ENCODE measurements at regions of chr11 and their contacts with region 1.

Region 1: DNA sequence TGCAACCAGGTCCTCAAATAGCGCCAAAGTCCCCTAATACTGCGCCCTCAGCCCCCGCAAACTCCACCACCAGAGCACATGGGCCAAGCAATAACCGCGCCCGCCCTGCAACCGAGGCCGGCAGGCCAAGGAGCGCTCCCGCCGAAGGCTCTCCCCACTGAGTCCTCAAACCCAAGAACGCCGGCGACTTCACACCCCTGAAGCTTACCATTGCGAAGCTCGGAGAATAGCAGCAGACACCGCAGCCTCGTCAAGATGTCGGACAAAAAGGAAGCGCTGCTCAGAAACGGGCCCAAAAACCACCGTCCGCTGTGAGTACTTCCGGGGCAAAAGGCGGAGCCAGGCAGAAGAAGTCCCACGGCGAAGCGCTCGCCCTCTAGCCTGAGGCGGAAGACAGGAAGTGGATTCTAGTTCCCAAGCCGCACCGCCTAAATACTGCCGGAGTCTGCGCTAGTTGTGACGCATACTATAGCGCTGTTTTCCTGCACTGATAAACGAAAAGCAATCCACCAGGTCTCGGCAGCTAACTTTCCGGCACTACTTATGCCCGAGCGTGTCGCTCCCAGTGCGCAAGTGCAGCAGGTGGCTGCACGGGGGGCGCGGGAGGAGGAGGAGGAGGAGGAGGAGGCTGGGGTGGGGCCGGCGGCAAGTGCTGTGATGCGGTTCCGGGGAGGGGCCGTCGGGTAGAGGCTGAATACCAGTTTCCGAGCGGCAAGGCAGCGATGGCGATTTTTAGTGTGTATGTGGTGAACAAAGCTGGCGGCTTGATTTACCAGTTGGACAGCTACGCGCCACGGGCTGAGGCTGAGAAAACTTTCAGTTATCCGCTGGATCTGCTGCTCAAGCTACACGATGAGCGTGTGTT is at the starts of genes RPS25 and TRAPPC4:
- DNase-seq: peak; percentile 96 to 97 (median 96)
- H3K4me3 ChIP-seq: peak within 1 kb of the TSS; percentile 87 to 88 (median 88)
- H3K4me3 Mint-ChIP-seq: peak within 1 kb of the TSS; percentile 96 to 97
- H3K27ac ChIP-seq: peak within 1 kb of the TSS; percentile 93 to 96
- H3K27ac Mint-ChIP-seq: peak within 1 kb of the TSS; percentile 98 to 100 (median 99)
- H3K4me1 ChIP-seq: peaks cover 26 to 34% of the 10 kb centered on the region in 2 donors
- H3K4me1 Mint-ChIP-seq: peaks cover 24% of the 10 kb centered on the region
- H3K27me3 ChIP-seq: no peaks in the 10 kb centered on the region
- H3K27me3 Mint-ChIP-seq: peaks cover 0 to 1% (median 0%) of the 10 kb centered on the region in 3 donors
- CTCF ChIP-seq: no peak
- polyA plus RNA-seq, gene RPS25: 1,137 to 1,336 (median 1,264) TPM
- polyA plus RNA-seq, gene TRAPPC4: 46.9 to 54.5 (median 50.0) TPM

Region 2: GRCh38 chr11:118997627-118998387 is 20.5 kb before region 1 on chr11 and contains the start of gene CENATAC:
- intact Hi-C with region 1: loop called (anchors 1 to 2 kb)
- DNase-seq: peak; percentile 91 to 95 (median 93)
- H3K4me3 ChIP-seq: peak within 1 kb of the TSS; percentile 65 to 87 (median 82)
- H3K4me3 Mint-ChIP-seq: peak within 1 kb of the TSS; percentile 95 to 97
- H3K27ac ChIP-seq: peak within 1 kb of the TSS; percentile 37 to 87
- H3K27ac Mint-ChIP-seq: peak within 1 kb of the TSS; percentile 92 to 97 (median 95)
- H3K4me1 ChIP-seq: peaks cover 19 to 23% of the 10 kb centered on the region in 2 donors
- H3K4me1 Mint-ChIP-seq: peaks cover 25% of the 10 kb centered on the region
- H3K27me3 ChIP-seq: no peaks in the 10 kb centered on the region
- H3K27me3 Mint-ChIP-seq: peaks cover 0 to 2% (median 0%) of the 10 kb centered on the region in 3 donors
- CTCF ChIP-seq: no peak
- polyA plus RNA-seq, gene CENATAC: 2.7 to 47.8 (median 4.1) TPM

Region 3: DNA sequence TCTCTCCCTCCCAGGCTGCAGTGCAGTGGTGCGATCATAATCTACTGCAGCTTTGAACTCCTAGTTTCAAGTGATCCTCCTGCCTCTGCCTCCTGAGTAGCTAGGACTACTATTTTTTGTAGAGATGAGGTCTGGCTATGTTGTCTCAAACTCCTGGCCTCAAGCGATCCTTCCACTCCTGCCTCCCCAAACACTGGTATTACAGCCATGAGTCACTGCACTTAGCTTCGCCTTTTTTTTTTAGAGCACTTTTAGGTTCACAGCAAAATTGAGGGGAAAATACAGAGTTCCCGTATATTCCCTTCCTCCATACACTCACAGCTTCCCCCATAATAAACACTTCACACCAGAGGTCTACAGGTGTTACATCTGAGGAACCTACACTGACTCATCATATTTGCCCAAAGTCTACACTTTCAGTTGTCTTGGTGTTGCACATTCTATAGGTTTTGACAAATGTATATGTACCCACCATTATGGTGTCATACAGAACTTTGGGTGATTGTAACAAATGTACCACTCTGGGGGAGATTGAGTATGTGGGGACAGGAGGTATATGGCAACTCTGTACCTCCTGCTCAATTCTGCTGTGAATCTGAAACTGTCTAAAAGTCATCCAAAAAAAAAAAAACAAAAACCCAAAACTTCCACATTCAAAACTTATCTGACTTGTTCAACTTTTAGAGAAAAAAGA is 23.7 kb after region 1 on chr11:
- intact Hi-C with region 1: no loop called
- DNase-seq: no peak
- H3K4me3 ChIP-seq: no peak overlapping the region
- H3K4me3 Mint-ChIP-seq: no peak overlapping the region
- H3K27ac ChIP-seq: no peak overlapping the region
- H3K27ac Mint-ChIP-seq: no peak overlapping the region
- H3K4me1 ChIP-seq: no peaks in the 10 kb centered on the region
- H3K4me1 Mint-ChIP-seq: peaks cover 11% of the 10 kb centered on the region
- H3K27me3 ChIP-seq: no peaks in the 10 kb centered on the region
- H3K27me3 Mint-ChIP-seq: peaks cover 0 to 5% (median 0%) of the 10 kb centered on the region in 3 donors
- CTCF ChIP-seq: no peak

Region 4: GRCh38 chr11:119067371-119068222 is 49.3 kb after region 1 on chr11 and contains the start of gene VPS11:
- intact Hi-C with region 1: loop called in 1 of 2 experiments (anchors 5 kb)
- DNase-seq: peak; percentile 95 to 97 (median 96)
- H3K4me3 ChIP-seq: peak within 1 kb of the TSS; percentile 77 to 93 (median 89)
- H3K4me3 Mint-ChIP-seq: peak within 1 kb of the TSS; percentile 94 to 97
- H3K27ac ChIP-seq: peak within 1 kb of the TSS; percentile 91 to 96
- H3K27ac Mint-ChIP-seq: peak within 1 kb of the TSS; percentile 97 to 99 (median 98)
- H3K4me1 ChIP-seq: peaks cover 29 to 37% of the 10 kb centered on the region in 2 donors
- H3K4me1 Mint-ChIP-seq: peaks cover 33% of the 10 kb centered on the region
- H3K27me3 ChIP-seq: no peaks in the 10 kb centered on the region
- H3K27me3 Mint-ChIP-seq: peaks cover 0 to 3% (median 0%) of the 10 kb centered on the region in 3 donors
- CTCF ChIP-seq: no peak
- polyA plus RNA-seq, gene VPS11: 28.6 to 56.6 (median 43.3) TPM

Region 5: GRCh38 chr11:119084663-119085436 is 66.5 kb after region 1 on chr11 and contains the start of gene HMBS:
- intact Hi-C with region 1: no loop called
- DNase-seq: peak; percentile 87 to 97 (median 96)
- H3K4me3 ChIP-seq: peak within 1 kb of the TSS; percentile 50 to 96 (median 77)
- H3K4me3 Mint-ChIP-seq: peak within 1 kb of the TSS; percentile 92 to 98
- H3K27ac ChIP-seq: peak within 1 kb of the TSS; percentile 83 to 90
- H3K27ac Mint-ChIP-seq: peak within 1 kb of the TSS; percentile 89 to 97 (median 95)
- H3K4me1 ChIP-seq: peaks cover 25 to 32% of the 10 kb centered on the region in 2 donors
- H3K4me1 Mint-ChIP-seq: peaks cover 39% of the 10 kb centered on the region
- H3K27me3 ChIP-seq: no peaks in the 10 kb centered on the region
- H3K27me3 Mint-ChIP-seq: peaks cover 0 to 1% (median 1%) of the 10 kb centered on the region in 3 donors
- CTCF ChIP-seq: no peak
- polyA plus RNA-seq, gene HMBS: 21.1 to 26.4 (median 25.2) TPM

Region 6: GRCh38 chr11:119121008-119121810 is 102.9 kb after region 1 on chr11 and contains the start of gene HINFP:
- intact Hi-C with region 1: no loop called
- DNase-seq: peak; percentile 98 to 99 (median 98)
- H3K4me3 ChIP-seq: peak within 1 kb of the TSS; percentile 62 to 97 (median 97)
- H3K4me3 Mint-ChIP-seq: peak within 1 kb of the TSS; percentile 90 to 93
- H3K27ac ChIP-seq: peak within 1 kb of the TSS; percentile 40 to 81
- H3K27ac Mint-ChIP-seq: peak within 1 kb of the TSS; percentile 83 to 94 (median 90)
- H3K4me1 ChIP-seq: peaks cover 32 to 39% of the 10 kb centered on the region in 2 donors
- H3K4me1 Mint-ChIP-seq: peaks cover 34% of the 10 kb centered on the region
- H3K27me3 ChIP-seq: no peaks in the 10 kb centered on the region
- H3K27me3 Mint-ChIP-seq: peaks cover 0 to 5% (median 0%) of the 10 kb centered on the region in 3 donors
- CTCF ChIP-seq: no peak
- polyA plus RNA-seq, gene HINFP: 8.0 to 43.0 (median 8.6) TPM

Measured in CD14-positive monocyte (primary cell).